ENCODE measurements at regions of chr11 and their contacts with region 1.

Region 1: DNA sequence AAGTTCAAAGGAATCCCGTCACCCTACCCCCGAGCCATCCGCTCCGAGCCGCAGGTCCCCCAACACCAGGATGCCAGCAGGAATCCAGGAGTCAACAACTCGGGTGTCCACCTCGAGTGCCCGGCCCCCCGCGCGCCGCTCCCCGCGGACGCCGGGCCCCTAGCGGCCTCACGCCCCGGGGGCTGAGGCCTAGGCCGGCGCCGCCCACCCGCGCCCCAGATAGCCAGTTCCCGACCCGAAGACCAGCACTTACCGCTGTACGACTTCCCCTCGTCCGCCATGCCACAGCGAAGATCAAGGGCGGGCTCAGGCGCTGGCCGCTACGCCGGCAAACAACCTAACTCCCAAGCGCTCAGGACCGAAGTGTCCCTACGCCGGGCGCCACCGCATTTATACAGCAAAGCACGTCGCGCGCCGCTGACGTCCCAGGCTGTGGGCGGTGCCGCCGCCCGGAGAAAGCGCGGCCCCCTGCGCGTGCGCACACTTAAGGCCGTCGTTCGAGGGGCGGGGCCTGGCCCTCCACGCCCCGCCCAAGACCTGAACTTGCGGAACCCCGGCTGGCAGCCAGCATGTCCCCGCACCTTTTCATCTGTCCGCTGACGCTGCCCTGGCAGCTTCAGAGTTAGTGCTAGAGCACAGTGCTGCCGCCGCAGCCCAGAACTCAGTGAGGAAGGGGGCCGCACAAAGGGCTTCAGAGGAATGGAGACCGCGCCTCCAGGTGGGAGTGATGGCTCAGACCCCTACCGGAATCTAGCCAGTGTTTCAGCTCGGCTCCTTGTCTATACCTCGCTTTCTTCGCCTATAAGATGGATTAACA is at the start of gene NXF1:
- DNase-seq: peak; percentile 97
- H3K4me3 ChIP-seq: peak within 1 kb of the TSS; percentile 70 to 93 (median 80)
- H3K27ac ChIP-seq: peak within 1 kb of the TSS; percentile 57
- H3K4me1 ChIP-seq: peaks cover 22% of the 10 kb centered on the region
- H3K27me3 ChIP-seq: no peaks in the 10 kb centered on the region
- CTCF ChIP-seq: peak in 1 of 2 donors; percentile 11
- POLR2A ChIP-seq: peak; percentile 100
- total RNA-seq, gene NXF1: 71.4 and 74.4 TPM in 2 replicates

Region 2: DNA sequence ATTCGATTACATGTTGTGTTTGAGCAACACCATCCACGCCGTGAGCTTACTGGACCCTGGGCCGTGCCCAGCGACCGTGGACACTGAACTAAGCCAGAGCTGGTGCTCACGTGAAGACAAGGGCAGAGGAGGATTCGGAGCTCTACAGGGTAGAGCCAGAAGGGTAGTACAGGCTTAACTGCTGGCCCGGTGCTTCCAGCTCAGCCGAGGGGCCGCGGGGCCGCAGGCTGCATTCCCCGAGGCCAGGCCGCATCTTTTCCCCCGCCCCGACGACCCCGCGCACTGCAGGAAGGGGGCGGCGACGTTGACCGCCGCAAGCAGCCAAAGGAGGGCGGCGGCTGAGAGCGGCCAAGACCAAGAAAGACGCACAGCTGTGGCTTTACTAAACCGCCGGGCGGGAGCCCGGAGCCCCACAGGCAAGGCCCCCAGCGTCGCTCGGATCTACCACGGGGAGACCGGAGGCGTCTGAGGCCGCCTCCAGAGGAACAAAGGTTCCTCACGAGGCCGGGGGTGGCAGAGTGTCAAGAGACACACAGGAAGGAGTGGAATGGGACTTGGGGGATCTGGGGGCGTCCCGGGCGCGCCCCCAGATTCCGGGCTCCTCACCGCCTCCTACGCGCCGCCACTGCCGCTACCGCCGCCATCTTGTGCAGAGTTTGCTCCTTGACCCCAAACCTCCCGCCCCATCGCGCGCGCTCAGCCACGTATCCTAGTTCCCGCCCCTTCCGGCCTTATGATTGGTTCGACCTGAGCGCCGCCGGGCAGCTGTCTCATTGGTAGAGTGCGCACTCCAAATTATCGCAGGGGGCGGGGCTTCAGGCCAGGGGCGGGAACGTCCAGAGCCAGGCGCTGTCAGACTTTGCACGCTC is 159.1 kb before region 1 on chr11 and contains the start of gene GANAB:
- CTCF ChIA-PET with region 1: no interaction called
- POLR2A ChIA-PET with region 1: no interaction called
- dilution Hi-C with region 1: no loop called
- intact Hi-C with region 1: no loop called
- DNase-seq: peak; percentile 97
- H3K4me3 ChIP-seq: peak within 1 kb of the TSS; percentile 62 to 87 (median 65)
- H3K27ac ChIP-seq: peak within 1 kb of the TSS; percentile 80
- H3K4me1 ChIP-seq: peaks cover 11% of the 10 kb centered on the region
- H3K27me3 ChIP-seq: no peaks in the 10 kb centered on the region
- CTCF ChIP-seq: no peak
- POLR2A ChIP-seq: peak; percentile 97
- total RNA-seq, gene GANAB: 357 and 389 TPM in 2 replicates

Region 3: GRCh38 chr11:62831520-62832335 is 26.4 kb after region 1 on chr11 and contains the start of gene STX5:
- CTCF ChIA-PET with region 1: interaction called, 3 read pairs
- POLR2A ChIA-PET with region 1: interaction called, 8 read pairs
- dilution Hi-C with region 1: no loop called
- intact Hi-C with region 1: loop called (anchors 1 kb)
- DNase-seq: peak; percentile 99
- H3K4me3 ChIP-seq: peak within 1 kb of the TSS; percentile 62 to 82 (median 75)
- H3K27ac ChIP-seq: peak within 1 kb of the TSS; percentile 76
- H3K4me1 ChIP-seq: peaks cover 13% of the 10 kb centered on the region
- H3K27me3 ChIP-seq: no peaks in the 10 kb centered on the region
- CTCF ChIP-seq: no peak
- POLR2A ChIP-seq: peak; percentile 97
- total RNA-seq, gene STX5: 41.3 and 42.8 TPM in 2 replicates

Measured in endothelial cell of umbilical vein (primary cell).